Activated T-helper 1 cell treated with anti-CD3 and anti-CD28 coated beads, Interleukin-12 subunit alpha, Interleukin-12 subunit beta, Interleukin-2, Interleukin-4 antibody, amounts not matched to agents 30 ng/mL and 10 ng/mL and 1 ng/mL, durations not matched to agents 14 hours and 24 hours and 36 hours (primary cell): ENCODE measurements at regions of chr1 and their contacts with region 1.

Region 1: DNA sequence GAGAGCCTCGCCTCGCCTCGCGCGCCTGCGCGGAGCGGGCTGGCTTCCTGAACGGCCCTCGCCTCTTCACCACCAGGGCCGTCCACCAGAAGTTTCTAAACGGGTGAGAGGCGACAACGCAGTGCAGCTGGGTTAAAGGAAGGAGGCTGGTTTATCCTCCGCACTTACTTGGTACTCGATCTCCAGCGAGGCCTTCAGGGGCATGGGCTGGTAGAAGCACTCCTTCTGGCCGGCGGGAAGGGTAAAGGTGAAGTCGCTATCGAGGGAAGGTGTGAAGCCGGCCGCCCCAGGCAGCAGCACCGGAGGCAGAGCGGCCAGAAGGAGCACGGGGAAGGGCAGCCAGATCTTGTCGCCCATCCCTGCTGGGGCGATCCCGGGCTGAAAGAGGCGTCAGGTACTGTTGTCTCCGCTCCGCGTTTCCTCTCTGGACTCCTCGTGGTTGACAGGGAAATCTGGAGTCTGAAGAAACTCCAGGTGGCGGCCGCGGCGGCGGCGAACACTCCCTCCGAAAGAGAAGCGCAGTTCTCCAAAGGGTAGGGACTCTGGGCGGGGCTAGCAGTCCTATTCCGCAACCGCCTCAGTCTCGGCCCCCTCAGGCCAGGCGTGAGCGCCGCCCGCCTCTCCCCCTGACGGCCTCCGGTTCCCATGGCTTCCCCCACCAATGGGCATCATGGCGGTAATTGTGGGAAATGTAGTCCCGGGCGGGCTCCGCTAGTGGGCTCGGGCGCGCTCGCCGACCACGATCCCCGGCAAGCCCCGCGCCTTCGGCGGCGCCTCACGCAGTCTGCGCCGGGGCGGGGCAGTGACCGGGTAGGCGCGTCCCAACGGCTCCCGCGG is at the start of gene TMED5:
- DNase-seq: peak; percentile 98
- H3K4me3 Mint-ChIP-seq: peak within 1 kb of the TSS; percentile 93
- H3K27ac Mint-ChIP-seq: peak within 1 kb of the TSS; percentile 96
- H3K4me1 Mint-ChIP-seq: peaks cover 57% of the 10 kb centered on the region
- H3K27me3 Mint-ChIP-seq: no peaks in the 10 kb centered on the region
- total RNA-seq, gene TMED5: 46.7 and 48.7 TPM in 2 replicates

Region 2: DNA sequence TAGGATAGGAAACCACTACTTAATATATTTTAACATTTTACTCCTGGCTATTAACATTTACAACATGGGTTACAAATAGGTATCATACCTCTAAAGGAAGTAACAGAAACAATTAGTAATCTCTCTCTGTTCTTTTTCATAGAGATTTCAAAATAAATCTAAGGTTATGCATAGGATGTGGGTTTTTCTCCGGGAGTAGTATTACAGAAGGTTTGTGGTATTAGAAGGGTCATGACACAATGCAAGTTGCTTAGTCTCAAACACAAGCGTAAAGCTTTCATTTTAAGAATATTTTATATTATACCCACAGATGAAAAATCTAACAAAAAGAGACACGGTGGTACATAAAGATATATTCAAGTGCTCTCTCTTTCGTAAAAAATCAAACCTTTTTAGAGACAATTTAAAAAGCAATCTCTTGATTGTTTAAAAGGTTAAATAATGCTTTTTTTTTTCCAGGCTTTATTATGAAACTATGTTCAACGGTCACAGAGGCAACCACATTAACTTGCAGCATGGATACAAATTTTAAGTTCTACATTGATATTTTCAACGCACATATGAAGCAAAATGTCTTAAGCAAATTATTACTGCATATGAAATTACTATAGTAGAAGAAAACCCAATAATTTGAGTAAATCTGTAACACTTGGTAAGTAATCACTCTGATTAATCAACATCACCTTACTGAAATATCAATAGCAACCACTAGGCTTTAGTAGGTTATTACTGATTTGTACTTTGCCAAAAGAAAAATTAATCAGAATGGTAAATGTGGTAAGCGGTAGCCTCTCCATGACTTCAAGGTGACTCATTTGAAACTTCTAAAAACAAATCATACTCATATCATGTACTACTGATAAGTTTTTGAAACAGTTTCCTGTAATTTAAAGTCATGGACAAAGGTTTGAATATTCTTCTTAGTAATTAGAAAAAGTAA is 596.0 kb before region 1 on chr1:
- intact Hi-C with region 1: loop called (anchors 10 kb)
- DNase-seq: no peak
- H3K4me3 Mint-ChIP-seq: peak overlapping the region; percentile 62
- H3K27ac Mint-ChIP-seq: peak overlapping the region; percentile 91
- H3K4me1 Mint-ChIP-seq: peaks cover 75% of the 10 kb centered on the region
- H3K27me3 Mint-ChIP-seq: no peaks in the 10 kb centered on the region

Region 3: DNA sequence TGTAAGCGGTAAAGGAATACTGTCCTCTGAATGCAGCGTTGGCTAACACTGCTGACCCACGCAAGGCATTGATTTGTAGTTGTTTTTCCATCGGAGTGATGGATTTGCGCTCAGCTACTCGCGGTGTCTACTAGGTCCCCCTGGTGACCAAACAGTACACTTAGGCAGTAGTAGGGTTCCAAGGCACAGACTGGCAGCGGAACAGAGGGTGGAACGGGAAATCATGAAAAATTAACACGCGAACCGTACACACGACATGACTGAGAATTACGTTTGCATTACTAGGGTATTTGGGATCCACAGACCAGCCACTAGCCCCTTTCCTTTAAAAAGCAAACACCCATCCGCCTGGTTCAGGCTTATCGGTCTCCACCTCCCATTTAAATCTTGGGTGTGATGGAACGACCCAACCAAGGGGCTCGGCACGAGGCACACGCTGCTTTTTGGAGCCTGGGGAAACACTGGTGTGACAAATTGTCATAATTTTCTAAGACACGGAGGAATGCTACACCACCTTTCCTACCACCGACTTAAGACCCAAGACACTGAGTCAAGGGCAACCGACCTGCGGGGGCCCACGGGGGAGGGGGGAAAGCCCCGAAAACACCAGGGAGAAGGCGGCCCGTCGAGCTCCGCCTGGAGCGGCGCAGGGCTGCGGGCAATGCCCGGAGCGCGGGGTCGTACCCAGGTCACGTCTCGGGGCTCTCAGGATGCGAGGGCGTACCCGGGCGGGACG is 219.5 kb before region 1 on chr1:
- intact Hi-C with region 1: loop called (anchors 2 kb)
- DNase-seq: peak; percentile 53
- H3K4me3 Mint-ChIP-seq: peak overlapping the region; percentile 90
- H3K27ac Mint-ChIP-seq: peak overlapping the region; percentile 97
- H3K4me1 Mint-ChIP-seq: peaks cover 41% of the 10 kb centered on the region
- H3K27me3 Mint-ChIP-seq: no peaks in the 10 kb centered on the region

Region 4: GRCh38 chr1:93021539-93022134 is 158.5 kb before region 1 on chr1:
- intact Hi-C with region 1: loop called (anchors 5 kb)
- DNase-seq: no peak
- H3K4me3 Mint-ChIP-seq: no peak overlapping the region
- H3K27ac Mint-ChIP-seq: no peak overlapping the region
- H3K4me1 Mint-ChIP-seq: peaks cover 6% of the 10 kb centered on the region
- H3K27me3 Mint-ChIP-seq: peaks cover 36% of the 10 kb centered on the region

Region 5: DNA sequence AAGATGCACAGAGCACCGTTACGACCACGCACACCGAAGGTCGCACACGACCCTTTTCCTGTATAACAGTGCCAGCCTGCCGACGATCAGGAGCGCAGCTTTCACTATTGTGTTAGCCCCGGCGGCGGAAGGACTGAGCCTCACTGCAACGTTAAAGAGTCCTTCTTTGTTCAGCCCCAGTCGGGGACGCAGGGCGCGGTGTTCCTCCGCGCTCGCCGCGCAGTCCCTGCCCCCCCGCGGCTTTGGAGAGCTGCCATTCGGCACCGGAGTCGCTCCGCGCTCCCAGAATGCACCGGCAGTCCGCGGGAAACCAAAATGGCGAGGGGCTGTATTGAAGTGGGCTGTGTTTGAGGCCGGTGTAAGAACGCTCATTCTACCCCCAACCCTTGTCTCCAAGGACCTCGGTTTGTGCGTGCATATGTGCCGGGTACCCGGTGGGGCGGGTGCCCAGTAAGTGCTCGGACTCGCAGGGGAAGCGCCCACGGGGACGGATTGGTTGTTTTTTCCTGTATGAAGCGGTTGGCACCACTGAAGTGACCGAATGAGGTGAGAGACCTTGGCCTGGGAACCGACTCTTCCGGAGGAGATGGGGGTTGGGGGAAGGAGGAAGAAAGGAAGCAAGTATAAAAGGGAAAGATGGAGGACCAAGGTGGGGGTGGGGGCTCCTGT is 101.0 kb before region 1 on chr1 and contains the start of gene MTF2:
- intact Hi-C with region 1: loop called (anchors 1 kb)
- DNase-seq: peak; percentile 93
- H3K4me3 Mint-ChIP-seq: peak within 1 kb of the TSS; percentile 98
- H3K27ac Mint-ChIP-seq: peak within 1 kb of the TSS; percentile 95
- H3K4me1 Mint-ChIP-seq: peaks cover 58% of the 10 kb centered on the region
- H3K27me3 Mint-ChIP-seq: no peaks in the 10 kb centered on the region
- total RNA-seq, gene MTF2: 68.4 and 71.0 TPM in 2 replicates

Region 6: GRCh38 chr1:93196591-93196990 is 16.5 kb after region 1 on chr1:
- intact Hi-C with region 1: loop called (anchors 1 kb)
- DNase-seq: no peak
- H3K4me3 Mint-ChIP-seq: no peak overlapping the region
- H3K27ac Mint-ChIP-seq: no peak overlapping the region
- H3K4me1 Mint-ChIP-seq: peaks cover 13% of the 10 kb centered on the region
- H3K27me3 Mint-ChIP-seq: no peaks in the 10 kb centered on the region

Region 7: DNA sequence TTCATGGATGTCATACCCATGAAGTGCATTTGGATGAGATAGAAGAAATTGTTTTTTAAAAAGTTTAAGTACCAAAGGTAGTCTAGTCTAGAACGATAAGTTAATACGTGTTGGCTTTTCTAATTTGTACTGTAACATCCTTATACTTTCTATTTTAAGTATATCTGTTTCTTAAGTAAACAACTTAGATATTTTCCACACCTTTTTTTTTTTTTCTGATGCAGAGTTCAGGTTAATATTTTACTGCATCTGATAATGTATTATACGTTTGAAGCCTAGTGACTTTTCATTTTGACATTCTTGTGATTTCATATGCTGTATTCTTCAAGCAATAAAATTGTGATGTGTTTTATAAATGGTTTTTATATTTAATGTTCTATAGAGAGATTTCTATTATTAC is 182.1 kb after region 1 on chr1:
- intact Hi-C with region 1: no loop called
- DNase-seq: no peak
- H3K4me3 Mint-ChIP-seq: no peak overlapping the region
- H3K27ac Mint-ChIP-seq: no peak overlapping the region
- H3K4me1 Mint-ChIP-seq: peaks cover 58% of the 10 kb centered on the region
- H3K27me3 Mint-ChIP-seq: no peaks in the 10 kb centered on the region

Region 8: GRCh38 chr1:93878889-93879586 is 698.9 kb after region 1 on chr1 and contains the start of gene DNTTIP2:
- intact Hi-C with region 1: loop called (anchors 1 kb)
- DNase-seq: peak; percentile 86
- H3K4me3 Mint-ChIP-seq: peak within 1 kb of the TSS; percentile 95
- H3K27ac Mint-ChIP-seq: peak within 1 kb of the TSS; percentile 98
- H3K4me1 Mint-ChIP-seq: peaks cover 55% of the 10 kb centered on the region
- H3K27me3 Mint-ChIP-seq: no peaks in the 10 kb centered on the region
- total RNA-seq, gene DNTTIP2: 80.3 and 90.8 TPM in 2 replicates